IMR-90 (cell line): ENCODE measurements at regions of chr16 and their contacts with region 1.

Region 1: DNA sequence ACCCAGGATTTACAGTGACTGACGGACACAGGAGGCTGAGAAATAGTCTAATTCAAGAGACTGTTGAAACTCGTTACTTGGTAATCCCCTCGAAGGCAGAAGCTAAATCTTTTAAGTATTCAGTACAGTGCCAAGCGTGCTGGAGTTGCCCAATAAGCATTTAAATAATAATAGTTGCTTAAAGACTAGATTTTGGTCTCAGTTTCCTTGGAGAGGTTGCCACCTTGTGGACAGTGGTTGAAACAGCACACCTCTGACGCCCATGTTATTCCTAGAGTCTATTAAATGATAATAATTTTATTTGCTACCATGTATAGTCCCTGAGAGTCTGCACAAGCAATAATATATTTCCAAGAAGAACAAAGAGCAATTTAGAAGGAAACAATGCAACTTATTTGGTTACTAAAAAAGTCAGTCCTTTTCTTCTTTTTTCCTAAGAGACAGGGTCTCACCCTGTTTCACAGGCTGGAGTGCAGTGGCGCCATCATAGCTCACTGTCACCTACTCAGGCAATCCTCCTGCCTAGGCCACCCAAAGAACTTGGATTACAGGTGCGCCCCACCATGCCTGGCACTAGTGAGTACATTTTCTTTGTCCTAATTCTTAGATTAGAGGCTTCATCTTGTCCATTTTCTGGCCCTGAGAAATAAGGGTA is 138.0 kb upstream of the NUDT7 start:
- DNase-seq: peak; percentile 63
- ATAC-seq: peak; percentile 83
- H3K4me3 ChIP-seq: no peak overlapping the region
- H3K27ac ChIP-seq: no peak overlapping the region
- H3K4me1 ChIP-seq: no peaks in the 10 kb centered on the region
- H3K27me3 ChIP-seq: peaks cover 7% of the 10 kb centered on the region
- CTCF ChIP-seq: peak; percentile 96
- POLR2A ChIP-seq: no peak
- RAD21 ChIP-seq: peak; percentile 88

Region 2: DNA sequence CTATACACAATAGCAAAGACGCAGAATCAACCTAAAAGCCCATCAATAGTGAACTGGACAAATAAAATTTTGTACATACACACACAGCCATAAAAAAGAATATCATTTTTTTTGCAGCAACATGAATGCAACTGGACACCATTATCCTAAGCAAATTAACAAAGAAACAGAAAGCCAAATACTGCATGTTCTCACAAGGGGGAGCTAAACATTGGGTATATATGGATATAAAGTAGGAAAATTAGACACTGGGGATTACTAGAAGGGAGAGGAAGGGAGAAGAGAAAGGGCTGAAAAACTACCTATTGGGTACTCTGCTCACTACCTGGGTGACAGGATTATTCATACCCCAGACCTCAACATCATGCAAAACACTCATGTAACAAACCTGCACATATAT is 177.7 kb before region 1 on chr16:
- CTCF ChIA-PET with region 1: no interaction called
- POLR2A ChIA-PET with region 1: no interaction called
- dilution Hi-C with region 1: no loop called
- in situ Hi-C with region 1: no loop called
- intact Hi-C with region 1: loop called (anchors 1 kb)
- DNase-seq: peak; percentile 1
- ATAC-seq: no peak
- H3K4me3 ChIP-seq: no peak overlapping the region
- H3K27ac ChIP-seq: no peak overlapping the region
- H3K4me1 ChIP-seq: no peaks in the 10 kb centered on the region
- H3K27me3 ChIP-seq: no peaks in the 10 kb centered on the region
- CTCF ChIP-seq: peak; percentile 16; the same call in 1 of the 2 replicates
- POLR2A ChIP-seq: no peak
- RAD21 ChIP-seq: no peak

Region 3: GRCh38 chr16:77437859-77438258 is 146.5 kb before region 1 on chr16:
- CTCF ChIA-PET with region 1: interaction called, 3 read pairs
- POLR2A ChIA-PET with region 1: no interaction called
- dilution Hi-C with region 1: no loop called
- in situ Hi-C with region 1: no loop called
- intact Hi-C with region 1: loop called (anchors 1 kb)
- DNase-seq: no peak
- ATAC-seq: no peak
- H3K4me3 ChIP-seq: no peak overlapping the region
- H3K27ac ChIP-seq: no peak overlapping the region
- H3K4me1 ChIP-seq: no peaks in the 10 kb centered on the region
- H3K27me3 ChIP-seq: peaks cover 12% of the 10 kb centered on the region
- CTCF ChIP-seq: no peak
- POLR2A ChIP-seq: no peak
- RAD21 ChIP-seq: no peak

Region 4: DNA sequence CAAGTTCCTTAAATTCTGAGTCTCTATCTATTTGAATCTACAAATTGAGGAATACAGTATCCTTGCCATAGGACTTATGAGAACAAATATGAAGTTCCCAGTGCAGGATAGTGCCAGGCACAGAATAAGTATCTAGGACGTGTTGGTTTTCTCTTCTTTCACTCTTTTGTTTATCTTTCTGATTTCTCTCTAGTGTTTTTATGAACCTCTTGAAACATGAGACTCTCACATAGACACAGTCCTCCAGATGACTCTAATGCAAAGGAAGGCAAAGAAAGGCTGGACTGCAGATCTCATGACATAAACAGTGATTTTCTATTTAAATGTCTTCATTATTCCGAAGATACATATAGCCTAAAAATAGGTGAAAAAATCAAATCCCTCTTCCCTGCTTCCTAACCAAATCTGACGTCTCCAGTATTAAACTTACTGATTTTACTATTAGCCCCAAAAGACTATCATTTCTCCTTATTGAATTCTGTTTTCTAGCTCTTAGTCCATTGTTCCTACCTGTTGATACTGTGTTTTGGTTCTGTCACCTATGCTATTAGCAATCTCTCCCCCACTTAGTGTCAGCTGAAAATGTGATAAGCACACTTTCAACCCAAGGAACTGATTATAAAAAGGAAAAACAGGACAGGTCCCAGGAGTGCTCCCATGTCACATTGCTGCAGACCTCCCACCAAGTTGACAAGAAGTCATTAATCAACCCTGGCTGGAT is 124.6 kb before region 1 on chr16:
- CTCF ChIA-PET with region 1: no interaction called
- POLR2A ChIA-PET with region 1: no interaction called
- dilution Hi-C with region 1: no loop called
- in situ Hi-C with region 1: no loop called
- intact Hi-C with region 1: no loop called
- DNase-seq: no peak
- ATAC-seq: no peak
- H3K4me3 ChIP-seq: no peak overlapping the region
- H3K27ac ChIP-seq: no peak overlapping the region
- H3K4me1 ChIP-seq: no peaks in the 10 kb centered on the region
- H3K27me3 ChIP-seq: no peaks in the 10 kb centered on the region
- CTCF ChIP-seq: no peak
- POLR2A ChIP-seq: no peak
- RAD21 ChIP-seq: no peak

Region 5: DNA sequence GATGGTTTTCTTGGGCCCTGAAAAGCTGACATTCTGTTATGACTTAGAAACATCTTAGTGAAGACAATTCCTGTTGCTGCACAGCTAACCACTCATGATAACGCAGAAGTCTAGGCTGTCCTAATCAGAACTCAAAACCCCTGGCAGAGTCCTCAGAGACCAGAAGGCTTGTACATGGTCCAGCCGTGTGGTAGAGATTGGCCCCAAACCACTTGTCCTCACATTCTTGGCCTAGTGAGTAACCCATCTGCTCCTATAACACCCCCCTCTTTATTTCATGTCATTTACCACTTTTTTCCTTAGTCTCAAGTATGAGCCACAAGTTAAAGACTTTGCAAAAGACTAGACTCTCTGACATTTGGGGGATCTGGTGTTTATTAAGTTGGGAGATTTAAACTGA is 33.0 kb before region 1 on chr16:
- CTCF ChIA-PET with region 1: no interaction called
- POLR2A ChIA-PET with region 1: no interaction called
- dilution Hi-C with region 1: no loop called
- in situ Hi-C with region 1: no loop called
- intact Hi-C with region 1: no loop called
- DNase-seq: no peak
- ATAC-seq: no peak
- H3K4me3 ChIP-seq: no peak overlapping the region
- H3K27ac ChIP-seq: no peak overlapping the region
- H3K4me1 ChIP-seq: no peaks in the 10 kb centered on the region
- H3K27me3 ChIP-seq: no peaks in the 10 kb centered on the region
- CTCF ChIP-seq: no peak
- POLR2A ChIP-seq: no peak
- RAD21 ChIP-seq: no peak

Region 6: GRCh38 chr16:77617990-77618389 is 33.7 kb after region 1 on chr16:
- CTCF ChIA-PET with region 1: no interaction called
- POLR2A ChIA-PET with region 1: no interaction called
- dilution Hi-C with region 1: no loop called
- in situ Hi-C with region 1: no loop called
- intact Hi-C with region 1: loop called (anchors 1 kb)
- DNase-seq: no peak
- ATAC-seq: no peak
- H3K4me3 ChIP-seq: no peak overlapping the region
- H3K27ac ChIP-seq: no peak overlapping the region
- H3K4me1 ChIP-seq: no peaks in the 10 kb centered on the region
- H3K27me3 ChIP-seq: no peaks in the 10 kb centered on the region
- CTCF ChIP-seq: no peak
- POLR2A ChIP-seq: no peak
- RAD21 ChIP-seq: no peak

Region 7: DNA sequence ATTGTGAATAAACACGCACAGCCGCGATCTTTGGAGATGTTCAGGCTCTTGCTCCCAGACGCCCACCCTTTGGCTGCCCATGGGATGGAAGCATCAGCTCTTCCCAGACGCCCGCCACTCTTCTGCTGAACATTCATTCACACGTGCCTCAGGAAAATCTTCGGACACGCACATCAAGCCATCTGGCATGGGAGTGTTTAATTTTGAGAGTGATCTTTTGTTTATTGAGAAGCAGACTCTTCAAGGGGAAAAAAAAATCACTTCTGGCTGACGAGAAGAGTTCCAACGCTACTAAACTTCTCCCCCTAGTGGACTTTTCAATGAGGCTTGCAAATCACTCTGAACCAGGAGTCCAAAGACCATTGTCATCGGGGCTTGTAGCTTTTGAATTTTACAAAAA is 76.0 kb after region 1 on chr16:
- CTCF ChIA-PET with region 1: no interaction called
- POLR2A ChIA-PET with region 1: no interaction called
- dilution Hi-C with region 1: no loop called
- in situ Hi-C with region 1: no loop called
- intact Hi-C with region 1: loop called (anchors 5 kb)
- DNase-seq: peak; percentile 52
- ATAC-seq: peak; percentile 67
- H3K4me3 ChIP-seq: no peak overlapping the region
- H3K27ac ChIP-seq: no peak overlapping the region
- H3K4me1 ChIP-seq: no peaks in the 10 kb centered on the region
- H3K27me3 ChIP-seq: no peaks in the 10 kb centered on the region; the same call in 1 of the 2 replicates
- CTCF ChIP-seq: peak; percentile 52
- POLR2A ChIP-seq: no peak
- RAD21 ChIP-seq: peak; percentile 39